PC-9 (cell line): ENCODE measurements at regions of chr17 and their contacts with region 1.

Region 1: GRCh38 chr17:27552469-27552779 is 78.6 kb upstream of the LGALS9 start:
- DNase-seq: peak; percentile 94 to 96
- H3K4me3 ChIP-seq: peak overlapping the region; percentile 12; the same call in 1 of the 2 replicates
- H3K27ac ChIP-seq: peak overlapping the region; percentile 86
- H3K4me1 ChIP-seq: peaks cover 44% of the 10 kb centered on the region
- H3K27me3 ChIP-seq: no peaks in the 10 kb centered on the region
- CTCF ChIP-seq: no peak

Region 2: GRCh38 chr17:27353461-27354050 is 198.9 kb before region 1 on chr17:
- CTCF ChIA-PET with region 1: no interaction called
- POLR2A ChIA-PET with region 1: no interaction called
- intact Hi-C with region 1: loop called (anchors 2 kb)
- DNase-seq: peak; percentile 76 to 92
- H3K4me3 ChIP-seq: peak overlapping the region; percentile 62
- H3K27ac ChIP-seq: peak overlapping the region; percentile 74
- H3K4me1 ChIP-seq: peaks cover 11% of the 10 kb centered on the region; the same call in 1 of the 2 replicates
- H3K27me3 ChIP-seq: no peaks in the 10 kb centered on the region
- CTCF ChIP-seq: peak; percentile 70

Region 3: DNA sequence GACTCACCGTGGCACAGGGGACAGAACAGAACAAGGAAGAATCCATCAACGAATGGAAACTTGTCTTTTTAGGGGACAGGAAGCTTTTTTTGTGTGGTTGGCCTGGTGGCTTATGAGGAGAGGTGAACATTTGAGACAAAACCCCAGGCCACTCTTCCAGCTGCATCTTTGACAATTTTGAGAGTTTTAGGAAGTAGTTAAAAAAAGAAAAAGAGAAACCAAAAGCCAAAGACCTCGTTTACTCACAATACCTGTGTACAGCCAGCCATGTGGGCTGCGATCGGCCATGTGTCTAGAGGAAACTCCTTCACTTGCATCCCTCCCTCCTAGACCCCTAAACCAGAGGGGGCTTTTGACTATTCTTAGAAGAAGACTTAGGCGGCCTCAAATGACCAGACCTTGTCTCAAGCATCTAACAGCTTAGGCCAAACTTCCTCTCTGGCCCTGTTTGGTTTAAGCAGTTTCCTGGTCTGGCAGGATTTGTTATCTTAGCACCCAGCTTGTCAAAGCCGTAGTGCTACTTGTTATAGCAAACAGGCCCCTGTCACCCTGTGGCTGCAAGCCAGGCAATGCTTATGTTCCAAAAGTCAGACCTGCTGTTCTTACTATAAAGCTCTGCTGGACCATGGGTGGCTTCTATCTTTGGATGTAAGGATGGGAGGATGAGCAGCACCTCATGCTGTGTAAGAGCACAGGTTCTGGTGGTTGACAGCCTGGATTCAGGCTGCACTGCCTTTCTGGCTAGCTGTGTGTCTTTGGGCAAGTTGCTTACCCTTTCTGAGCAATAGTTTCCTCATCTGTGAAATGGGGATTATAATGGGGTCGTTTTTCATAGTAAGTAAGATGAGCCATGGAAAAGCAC is 78.4 kb before region 1 on chr17:
- CTCF ChIA-PET with region 1: no interaction called
- POLR2A ChIA-PET with region 1: no interaction called
- intact Hi-C with region 1: loop called (anchors 5 kb)
- DNase-seq: peak in 1 of 2 experiments; percentile 17
- H3K4me3 ChIP-seq: no peak overlapping the region
- H3K27ac ChIP-seq: peak overlapping the region; percentile 95
- H3K4me1 ChIP-seq: peaks cover 41% of the 10 kb centered on the region
- H3K27me3 ChIP-seq: no peaks in the 10 kb centered on the region
- CTCF ChIP-seq: no peak

Region 4: GRCh38 chr17:27494192-27495091 is 58.0 kb before region 1 on chr17:
- CTCF ChIA-PET with region 1: no interaction called
- POLR2A ChIA-PET with region 1: no interaction called
- intact Hi-C with region 1: loop called (anchors 2 kb)
- DNase-seq: peak; percentile 76 to 84
- H3K4me3 ChIP-seq: peak overlapping the region; percentile 54; the same call in 1 of the 2 replicates
- H3K27ac ChIP-seq: peak overlapping the region; percentile 82
- H3K4me1 ChIP-seq: peaks cover 24% of the 10 kb centered on the region
- H3K27me3 ChIP-seq: no peaks in the 10 kb centered on the region
- CTCF ChIP-seq: peak; percentile 64

Region 5: DNA sequence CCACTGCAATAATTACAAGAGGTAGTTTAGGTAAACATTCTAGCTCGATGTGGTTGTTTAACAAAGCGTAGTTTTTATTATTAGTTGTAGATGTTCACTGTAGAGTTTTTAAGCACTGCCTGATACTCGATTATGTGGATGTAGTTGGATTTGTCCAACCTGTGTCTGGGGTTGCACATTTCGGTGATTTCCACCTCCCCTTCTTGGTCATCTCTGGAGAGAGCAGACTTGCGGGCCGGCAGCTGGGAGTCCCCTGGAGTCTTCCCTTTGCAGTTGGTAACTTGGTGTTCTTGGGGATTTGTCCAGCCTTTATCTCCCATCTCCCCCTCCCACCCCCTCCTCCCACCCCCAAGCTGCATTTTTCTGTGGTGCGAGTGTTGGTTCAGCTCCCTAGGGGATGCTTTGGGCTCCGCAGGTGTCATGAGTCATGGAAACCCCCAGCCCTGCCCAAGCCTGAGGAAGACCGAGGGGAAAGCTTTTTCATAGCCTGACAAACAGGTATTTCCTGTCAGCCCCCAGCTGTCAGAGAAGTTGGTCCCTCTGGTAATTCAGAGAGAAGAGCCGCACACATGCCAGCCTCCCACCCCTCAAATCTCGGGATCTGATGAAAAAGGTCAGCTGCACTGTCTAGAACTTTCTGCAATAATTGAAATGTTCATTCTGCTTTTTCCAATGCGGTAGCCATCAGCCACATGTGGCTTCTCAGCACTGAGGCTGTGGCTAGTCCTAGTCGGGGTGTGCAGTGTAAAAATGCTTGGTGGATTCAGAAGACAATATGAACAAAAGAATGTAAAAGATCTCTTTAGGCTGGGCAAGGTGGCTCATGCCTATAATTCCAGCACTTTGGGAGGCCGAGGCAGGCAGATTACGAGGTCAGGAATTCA is 45.8 kb before region 1 on chr17:
- CTCF ChIA-PET with region 1: no interaction called
- POLR2A ChIA-PET with region 1: no interaction called
- intact Hi-C with region 1: loop called (anchors 1 kb)
- DNase-seq: peak; percentile 73 to 78
- H3K4me3 ChIP-seq: peak overlapping the region; percentile 4; the same call in 1 of the 2 replicates
- H3K27ac ChIP-seq: peak overlapping the region; percentile 65
- H3K4me1 ChIP-seq: peaks cover 31% of the 10 kb centered on the region
- H3K27me3 ChIP-seq: no peaks in the 10 kb centered on the region
- CTCF ChIP-seq: no peak

Region 6: DNA sequence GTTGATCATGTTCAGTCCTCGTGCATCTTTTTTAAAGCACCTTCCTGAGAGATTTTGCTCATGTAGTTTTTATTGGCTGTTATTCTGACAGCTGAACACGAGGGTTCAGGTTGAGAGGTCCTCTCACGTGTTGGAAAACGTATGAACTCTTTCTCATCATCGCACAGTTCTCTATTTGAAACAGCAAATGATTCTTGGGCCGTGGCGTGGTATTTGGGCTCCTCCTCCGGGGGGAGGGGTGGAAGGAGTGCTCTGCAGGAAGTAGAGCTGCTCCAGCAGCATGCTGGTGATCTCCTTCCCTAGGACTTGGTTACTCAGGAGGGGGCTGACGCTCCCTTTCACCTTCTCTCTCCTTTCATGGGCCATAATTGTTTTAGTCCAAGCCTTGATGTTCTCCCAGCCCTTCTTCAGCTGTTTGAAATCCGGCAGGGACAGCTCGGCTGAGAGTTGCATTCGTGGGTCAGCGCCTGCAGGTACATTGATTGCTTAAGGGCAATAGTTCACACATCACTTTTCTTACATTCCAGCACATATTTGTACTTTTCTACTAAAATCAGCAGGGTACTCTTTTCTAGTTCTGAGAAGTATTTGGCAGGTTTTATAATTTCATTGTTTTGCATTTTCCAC is 25.7 kb before region 1 on chr17:
- CTCF ChIA-PET with region 1: no interaction called
- POLR2A ChIA-PET with region 1: no interaction called
- intact Hi-C with region 1: loop called (anchors 1 kb)
- DNase-seq: no peak
- H3K4me3 ChIP-seq: no peak overlapping the region
- H3K27ac ChIP-seq: no peak overlapping the region
- H3K4me1 ChIP-seq: peaks cover 48% of the 10 kb centered on the region
- H3K27me3 ChIP-seq: no peaks in the 10 kb centered on the region
- CTCF ChIP-seq: no peak